ENCODE measurements at regions of chr6 and their contacts with region 1.

Region 1: DNA sequence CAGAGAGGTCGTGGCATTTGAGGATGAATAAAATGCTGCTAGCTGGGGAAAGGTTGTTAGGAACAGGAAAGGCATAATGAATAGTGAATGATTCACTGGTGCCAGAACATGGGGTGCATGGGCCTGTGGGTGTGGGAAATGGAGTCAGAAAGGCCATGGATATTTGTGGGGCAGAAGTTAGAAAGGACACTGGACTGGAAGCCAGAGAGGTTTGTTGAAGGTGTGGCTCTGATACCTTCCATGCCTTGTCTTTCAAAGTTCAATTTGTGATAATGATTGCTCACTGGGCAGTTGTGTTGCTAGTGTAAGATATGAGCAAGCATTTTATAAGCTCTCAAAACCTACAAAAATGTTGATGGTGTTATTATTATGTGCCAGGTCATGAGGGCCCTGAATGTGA is 32.7 kb downstream of the LRRC1 start:
- DNase-seq: no peak
- H3K4me3 ChIP-seq: no peak overlapping the region
- H3K27ac ChIP-seq: no peak overlapping the region
- H3K4me1 ChIP-seq: no peaks in the 10 kb centered on the region
- H3K27me3 ChIP-seq: no peaks in the 10 kb centered on the region
- CTCF ChIP-seq: no peak
- POLR2A ChIP-seq: no peak

Region 2: GRCh38 chr6:52399511-52400312 is 1427.8 kb before region 1 on chr6:
- intact Hi-C with region 1: no loop called
- DNase-seq: no peak
- H3K4me3 ChIP-seq: no peak overlapping the region
- H3K27ac ChIP-seq: no peak overlapping the region
- H3K4me1 ChIP-seq: no peaks in the 10 kb centered on the region
- H3K27me3 ChIP-seq: no peaks in the 10 kb centered on the region
- CTCF ChIP-seq: peak; percentile 51 to 73 (median 72)
- POLR2A ChIP-seq: no peak

Region 3: GRCh38 chr6:52849137-52849536 is 978.4 kb before region 1 on chr6:
- intact Hi-C with region 1: no loop called
- DNase-seq: no peak
- H3K4me3 ChIP-seq: no peak overlapping the region
- H3K27ac ChIP-seq: no peak overlapping the region
- H3K4me1 ChIP-seq: no peaks in the 10 kb centered on the region
- H3K27me3 ChIP-seq: no peaks in the 10 kb centered on the region
- CTCF ChIP-seq: no peak
- POLR2A ChIP-seq: no peak

Region 4: DNA sequence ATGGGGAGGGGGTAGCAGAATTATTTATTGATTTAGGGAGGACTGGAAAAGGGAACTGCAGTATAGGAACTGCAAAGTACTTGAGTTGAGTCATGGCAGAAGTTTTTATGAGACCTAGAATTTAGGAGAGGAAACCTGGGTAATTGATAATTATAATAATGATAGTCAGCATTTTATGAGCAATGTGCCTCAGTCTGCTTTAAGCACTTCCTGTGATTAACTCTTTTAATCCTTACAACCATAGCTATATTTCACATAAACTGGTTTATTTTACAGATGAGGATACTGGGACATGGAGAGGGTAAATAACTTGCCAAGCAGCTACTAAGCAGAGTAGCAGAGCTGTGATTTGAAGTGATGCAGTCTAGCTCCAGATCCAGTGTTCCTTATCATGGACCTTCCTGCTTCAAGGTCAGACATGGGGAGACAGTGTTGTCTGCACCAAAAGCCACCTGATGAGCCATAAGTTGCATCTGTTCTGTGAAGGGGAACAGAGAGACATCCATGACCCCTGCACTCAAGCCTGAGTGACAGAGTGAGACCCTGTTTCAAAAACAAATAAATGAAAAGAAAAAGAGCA is 19.1 kb before region 1 on chr6:
- intact Hi-C with region 1: loop called (anchors 1 kb)
- DNase-seq: no peak
- H3K4me3 ChIP-seq: no peak overlapping the region
- H3K27ac ChIP-seq: no peak overlapping the region
- H3K4me1 ChIP-seq: no peaks in the 10 kb centered on the region
- H3K27me3 ChIP-seq: no peaks in the 10 kb centered on the region
- CTCF ChIP-seq: no peak
- POLR2A ChIP-seq: no peak

Region 5: DNA sequence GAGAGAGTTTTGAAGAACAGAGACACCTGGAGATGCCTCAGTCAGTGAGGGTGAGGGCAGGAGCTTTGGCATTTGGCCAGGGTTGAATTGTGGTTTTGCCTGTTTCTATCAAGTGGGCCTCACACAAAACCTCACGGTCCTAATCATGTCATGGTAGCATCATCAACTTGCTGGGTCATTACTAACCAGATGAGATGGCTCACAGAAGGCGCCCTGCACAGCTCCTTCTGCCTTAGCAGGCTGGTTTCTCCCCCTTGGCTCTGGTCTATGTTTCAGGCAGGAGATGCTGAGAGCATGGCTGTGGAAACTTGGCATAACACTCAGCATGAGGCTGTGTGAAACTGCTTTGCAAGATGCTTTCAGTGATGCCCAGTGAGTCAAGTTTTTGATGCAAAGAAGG is 66.6 kb after region 1 on chr6:
- intact Hi-C with region 1: no loop called
- DNase-seq: no peak
- H3K4me3 ChIP-seq: no peak overlapping the region
- H3K27ac ChIP-seq: no peak overlapping the region
- H3K4me1 ChIP-seq: no peaks in the 10 kb centered on the region
- H3K27me3 ChIP-seq: no peaks in the 10 kb centered on the region
- CTCF ChIP-seq: no peak
- POLR2A ChIP-seq: no peak

Measured in breast epithelium (tissue), 4 donors.